Left cardiac atrium (tissue), 4 donors: ENCODE measurements at regions of chr2 and their contacts with region 1.

Region 1: GRCh38 chr2:24971536-24972314 is at the start of gene DNAJC27:
- DNase-seq: peak; percentile 98
- ATAC-seq: peak; percentile 96 to 97
- total RNA-seq, gene DNAJC27: 7.0 to 8.3 TPM

Region 2: GRCh38 chr2:24771764-24772586 is 199.8 kb before region 1 on chr2:
- intact Hi-C with region 1: no loop called
- DNase-seq: no peak
- ATAC-seq: no peak

Region 3: GRCh38 chr2:24932715-24933114 is 39.0 kb before region 1 on chr2:
- intact Hi-C with region 1: loop called in 1 of 2 experiments (anchors 2 kb)
- DNase-seq: no peak
- ATAC-seq: no peak

Region 4: GRCh38 chr2:25131567-25132298 is 160.0 kb after region 1 on chr2:
- intact Hi-C with region 1: loop called (anchors 1 to 2 kb)
- DNase-seq: peak; percentile 40
- ATAC-seq: peak; percentile 54 to 73